K562 (cell line): ENCODE measurements at regions of chr4 and their contacts with region 1.

Region 1: DNA sequence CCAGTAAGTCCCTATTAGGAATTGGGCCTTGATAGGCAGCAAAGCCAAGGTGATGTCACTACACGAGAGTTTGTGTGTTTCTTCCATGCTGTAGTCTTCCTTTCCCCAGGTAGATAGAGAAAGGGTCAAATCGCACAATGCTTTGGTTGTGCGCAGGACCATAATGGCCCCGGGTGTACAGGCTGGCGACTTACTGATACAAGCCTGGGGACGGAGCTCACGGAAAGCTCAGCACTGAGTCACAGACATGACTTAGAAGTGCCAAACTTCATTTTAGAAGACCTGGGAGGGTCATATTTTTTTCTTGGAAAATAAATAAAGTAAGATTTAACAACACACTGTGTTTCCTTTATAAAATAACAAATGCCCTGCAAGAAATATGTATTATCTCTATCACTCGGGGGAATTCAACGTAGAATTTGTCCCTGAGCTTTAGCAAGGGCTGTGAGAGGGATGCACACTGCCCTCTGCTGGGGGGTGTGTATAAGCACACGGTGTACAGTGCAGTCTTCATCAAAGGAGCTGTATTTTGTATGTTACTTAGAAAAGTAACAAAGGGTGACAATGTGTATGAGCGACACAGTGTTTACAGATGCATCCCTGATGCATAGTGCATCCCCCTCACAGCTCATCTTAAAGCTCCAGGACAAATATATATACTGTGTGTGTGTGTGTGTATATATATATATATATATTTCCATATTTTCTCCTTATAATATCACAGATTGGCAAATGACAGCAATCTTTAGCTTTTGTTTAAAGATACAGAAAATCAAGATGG is 254.5 kb upstream of the VEGFC start:
- DNase-seq: peak; percentile 20 to 62 (median 40)
- ATAC-seq: peak; percentile 86
- H3K4me3 ChIP-seq: no peak overlapping the region
- H3K27ac ChIP-seq: no peak overlapping the region
- H3K4me1 ChIP-seq: no peaks in the 10 kb centered on the region
- H3K27me3 ChIP-seq: no peaks in the 10 kb centered on the region
- CTCF ChIP-seq: peak; percentile 43 to 65 (median 53); a peak in 5 of 6 replicates
- EP300 ChIP-seq: no peak
- POLR2A ChIP-seq: no peak
- RAD21 ChIP-seq: peak; percentile 33 to 52

Region 2: DNA sequence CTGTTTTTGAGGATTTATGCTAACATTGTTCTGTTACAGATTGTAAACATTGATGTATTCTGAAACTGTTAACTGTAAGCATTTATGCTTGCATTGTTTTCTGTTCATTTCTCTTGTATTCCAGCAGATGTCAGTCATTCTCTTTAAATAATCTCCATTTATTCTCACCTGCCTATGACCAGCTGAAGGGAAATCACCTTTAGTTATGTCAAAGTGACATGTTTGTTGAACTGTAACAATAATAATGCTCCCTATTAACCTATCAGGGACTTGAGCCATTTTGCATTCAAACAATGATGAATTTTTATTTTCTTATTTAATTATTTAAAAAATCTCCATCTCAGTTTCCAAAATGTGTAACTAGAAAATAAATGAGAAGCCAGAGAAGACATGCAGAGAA is 669.5 kb before region 1 on chr4:
- CTCF ChIA-PET with region 1: no interaction called
- POLR2A ChIA-PET with region 1: no interaction called
- in situ Hi-C with region 1: no loop called
- intact Hi-C with region 1: loop called (anchors 2 kb)
- DNase-seq: peak in 1 of 4 experiments; percentile 3
- ATAC-seq: peak; percentile 72
- H3K4me3 ChIP-seq: no peak overlapping the region
- H3K27ac ChIP-seq: no peak overlapping the region
- H3K4me1 ChIP-seq: no peaks in the 10 kb centered on the region
- H3K27me3 ChIP-seq: no peaks in the 10 kb centered on the region
- CTCF ChIP-seq: peak in 1 of 3 experiments; percentile 38; a peak in 2 of 6 replicates
- EP300 ChIP-seq: no peak
- POLR2A ChIP-seq: no peak
- RAD21 ChIP-seq: peak; percentile 30 to 62; a peak in 3 of 4 replicates

Region 3: GRCh38 chr4:177339477-177340374 is 292.5 kb after region 1 on chr4:
- CTCF ChIA-PET with region 1: no interaction called
- POLR2A ChIA-PET with region 1: no interaction called
- in situ Hi-C with region 1: no loop called
- intact Hi-C with region 1: loop called (anchors 10 kb)
- DNase-seq: peak in 3 of 4 experiments; percentile 10 to 26 (median 15)
- ATAC-seq: peak; percentile 92
- H3K4me3 ChIP-seq: no peak overlapping the region
- H3K27ac ChIP-seq: no peak overlapping the region
- H3K4me1 ChIP-seq: no peaks in the 10 kb centered on the region
- H3K27me3 ChIP-seq: no peaks in the 10 kb centered on the region
- CTCF ChIP-seq: peak; percentile 32 to 70 (median 42); a peak in 4 of 6 replicates
- EP300 ChIP-seq: no peak
- POLR2A ChIP-seq: no peak
- RAD21 ChIP-seq: peak; percentile 65 to 71